HEK293 (cell line): ENCODE measurements at regions of chr22 and their contacts with region 1.

Region 1: DNA sequence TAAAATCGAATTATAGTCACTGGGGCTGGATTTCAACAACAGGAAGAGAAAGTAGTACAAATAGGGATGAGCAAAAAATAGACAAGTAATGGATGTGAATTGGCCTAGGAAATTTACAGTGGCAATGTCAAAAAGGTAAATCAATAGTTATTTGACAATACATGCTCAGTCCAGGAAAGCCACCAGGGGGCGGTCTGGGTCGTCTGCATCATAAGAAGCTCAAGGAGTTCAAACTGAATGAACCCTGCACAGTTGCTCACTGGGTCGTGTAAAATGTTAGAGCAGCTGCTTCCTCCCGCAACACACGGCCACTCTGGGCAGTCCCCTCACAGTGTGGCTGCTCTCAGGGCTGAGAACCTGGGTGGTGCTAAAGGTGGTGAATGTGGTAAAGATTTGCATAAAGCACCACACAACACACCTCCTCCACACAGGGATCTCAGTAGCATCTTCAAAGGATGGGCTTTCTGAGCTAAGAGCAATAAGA is 85.9 kb downstream of the ZNF280B start:
- H3K4me3 ChIP-seq: no peak overlapping the region
- H3K27ac ChIP-seq: no peak overlapping the region
- H3K4me1 ChIP-seq: no peaks in the 10 kb centered on the region
- CTCF ChIP-seq: peak; percentile 53; the same call in 1 of the 2 replicates

Region 2: GRCh38 chr22:22348127-22348814 is 74.4 kb before region 1 on chr22:
- CTCF ChIA-PET with region 1: interaction called, 15 read pairs
- POLR2A ChIA-PET with region 1: no interaction called
- H3K4me3 ChIP-seq: no peak overlapping the region
- H3K27ac ChIP-seq: no peak overlapping the region
- H3K4me1 ChIP-seq: no peaks in the 10 kb centered on the region
- CTCF ChIP-seq: no peak

Region 3: GRCh38 chr22:22380098-22381030 is 42.3 kb before region 1 on chr22:
- CTCF ChIA-PET with region 1: interaction called, 11 read pairs
- POLR2A ChIA-PET with region 1: no interaction called
- H3K4me3 ChIP-seq: no peak overlapping the region
- H3K27ac ChIP-seq: no peak overlapping the region
- H3K4me1 ChIP-seq: no peaks in the 10 kb centered on the region
- CTCF ChIP-seq: no peak

Region 4: DNA sequence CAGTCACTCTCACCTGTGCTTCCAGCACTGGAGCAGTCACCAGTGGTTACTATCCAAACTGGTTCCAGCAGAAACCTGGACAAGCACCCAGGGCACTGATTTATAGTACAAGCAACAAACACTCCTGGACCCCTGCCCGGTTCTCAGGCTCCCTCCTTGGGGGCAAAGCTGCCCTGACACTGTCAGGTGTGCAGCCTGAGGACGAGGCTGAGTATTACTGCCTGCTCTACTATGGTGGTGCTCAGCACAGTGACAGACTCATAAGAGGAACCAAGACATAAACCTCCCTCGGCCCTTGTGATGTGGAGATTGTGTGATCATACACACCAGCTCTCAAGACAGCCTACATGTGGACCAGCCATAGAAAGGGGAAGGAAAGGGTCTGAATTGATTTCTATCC is 27.4 kb before region 1 on chr22:
- CTCF ChIA-PET with region 1: interaction called, 12 read pairs
- POLR2A ChIA-PET with region 1: no interaction called
- H3K4me3 ChIP-seq: no peak overlapping the region
- H3K27ac ChIP-seq: no peak overlapping the region
- H3K4me1 ChIP-seq: no peaks in the 10 kb centered on the region
- CTCF ChIP-seq: no peak

Region 5: GRCh38 chr22:22408731-22409696 is 13.7 kb before region 1 on chr22:
- CTCF ChIA-PET with region 1: interaction called, 59 read pairs
- POLR2A ChIA-PET with region 1: no interaction called
- H3K4me3 ChIP-seq: no peak overlapping the region
- H3K27ac ChIP-seq: no peak overlapping the region
- H3K4me1 ChIP-seq: no peaks in the 10 kb centered on the region
- CTCF ChIP-seq: peak; percentile 44

Region 6: GRCh38 chr22:22450343-22450839 is 27.7 kb after region 1 on chr22:
- CTCF ChIA-PET with region 1: interaction called, 10 read pairs
- POLR2A ChIA-PET with region 1: no interaction called
- H3K4me3 ChIP-seq: no peak overlapping the region
- H3K27ac ChIP-seq: no peak overlapping the region
- H3K4me1 ChIP-seq: no peaks in the 10 kb centered on the region
- CTCF ChIP-seq: no peak

Region 7: GRCh38 chr22:22576244-22576988 is 153.7 kb after region 1 on chr22:
- CTCF ChIA-PET with region 1: interaction called, 11 read pairs
- POLR2A ChIA-PET with region 1: no interaction called
- H3K4me3 ChIP-seq: no peak overlapping the region
- H3K27ac ChIP-seq: no peak overlapping the region
- H3K4me1 ChIP-seq: no peaks in the 10 kb centered on the region
- CTCF ChIP-seq: peak; percentile 61; the same call in 1 of the 2 replicates